Activated CD4-positive, alpha-beta memory T cell treated with anti-CD3 and anti-CD28 coated beads for 36 hours (primary cell): ENCODE measurements at regions of chr3 and their contacts with region 1.

Region 1: DNA sequence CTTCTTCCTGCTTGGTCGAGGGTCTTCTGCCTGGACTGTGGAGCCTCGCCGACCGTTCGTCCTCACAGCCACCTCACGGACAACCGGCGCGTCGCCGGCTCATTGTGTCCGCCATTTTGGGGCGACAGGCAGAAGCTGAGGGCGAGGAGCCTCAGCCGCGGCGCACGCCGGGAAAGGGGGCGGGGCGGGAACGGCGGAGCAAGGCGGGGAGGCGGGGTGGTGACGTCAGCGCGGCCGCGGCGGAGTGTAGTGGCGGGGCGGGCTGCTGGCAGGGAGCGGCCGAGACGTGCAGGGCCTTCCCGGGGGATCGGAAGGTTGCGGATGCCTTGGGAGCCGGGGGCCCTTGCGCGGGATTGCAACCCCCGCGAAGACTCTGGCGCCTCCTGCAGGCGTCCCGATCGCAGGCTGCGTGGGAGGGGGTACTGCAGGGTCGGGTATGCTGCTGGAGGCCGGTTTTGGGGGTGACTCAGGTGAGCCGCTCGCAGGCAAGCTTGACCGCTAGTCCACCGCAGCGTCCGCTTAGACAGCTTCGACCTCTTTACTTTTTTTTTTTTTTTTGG is at the start of gene WDR82:
- DNase-seq: peak; percentile 99
- H3K4me3 Mint-ChIP-seq: peak within 1 kb of the TSS; percentile 92
- H3K27ac Mint-ChIP-seq: peak within 1 kb of the TSS; percentile 95
- H3K4me1 Mint-ChIP-seq: peaks cover 54% of the 10 kb centered on the region
- H3K27me3 Mint-ChIP-seq: no peaks in the 10 kb centered on the region
- total RNA-seq, gene WDR82: 110 to 111 TPM

Region 2: GRCh38 chr3:52154117-52155094 is 124.2 kb before region 1 on chr3 and contains the start of gene POC1A:
- CTCF ChIA-PET with region 1: no interaction called
- POLR2A ChIA-PET with region 1: no interaction called
- intact Hi-C with region 1: loop called (anchors 5 kb)
- DNase-seq: peak; percentile 94
- H3K4me3 Mint-ChIP-seq: peak within 1 kb of the TSS; percentile 88
- H3K27ac Mint-ChIP-seq: peak within 1 kb of the TSS; percentile 89
- H3K4me1 Mint-ChIP-seq: peaks cover 20% of the 10 kb centered on the region
- H3K27me3 Mint-ChIP-seq: no peaks in the 10 kb centered on the region
- total RNA-seq, gene POC1A: 28.5 to 30.5 TPM

Region 3: GRCh38 chr3:52231502-52232293 is 46.9 kb before region 1 on chr3:
- CTCF ChIA-PET with region 1: interaction called, 148 read pairs
- POLR2A ChIA-PET with region 1: interaction called, 16 read pairs
- intact Hi-C with region 1: no loop called
- DNase-seq: peak; percentile 90
- H3K4me3 Mint-ChIP-seq: no peak overlapping the region
- H3K27ac Mint-ChIP-seq: peak overlapping the region; percentile 73
- H3K4me1 Mint-ChIP-seq: peaks cover 37% of the 10 kb centered on the region
- H3K27me3 Mint-ChIP-seq: no peaks in the 10 kb centered on the region

Region 4: GRCh38 chr3:52245322-52246263 is 33.0 kb before region 1 on chr3 and contains the start of gene PPM1M:
- CTCF ChIA-PET with region 1: interaction called, 148 read pairs
- POLR2A ChIA-PET with region 1: interaction called, 128 read pairs
- intact Hi-C with region 1: loop called (anchors 1 kb)
- DNase-seq: peak; percentile 64
- H3K4me3 Mint-ChIP-seq: peak within 1 kb of the TSS; percentile 95
- H3K27ac Mint-ChIP-seq: peak within 1 kb of the TSS; percentile 94
- H3K4me1 Mint-ChIP-seq: peaks cover 80% of the 10 kb centered on the region
- H3K27me3 Mint-ChIP-seq: no peaks in the 10 kb centered on the region
- total RNA-seq, gene PPM1M: 111 TPM

Region 5: GRCh38 chr3:52291508-52292181 is 13.1 kb after region 1 on chr3:
- CTCF ChIA-PET with region 1: interaction called, 22 read pairs
- POLR2A ChIA-PET with region 1: interaction called, 21 read pairs
- intact Hi-C with region 1: loop called (anchors 1 kb)
- DNase-seq: peak; percentile 57
- H3K4me3 Mint-ChIP-seq: no peak overlapping the region
- H3K27ac Mint-ChIP-seq: no peak overlapping the region
- H3K4me1 Mint-ChIP-seq: peaks cover 17% of the 10 kb centered on the region
- H3K27me3 Mint-ChIP-seq: no peaks in the 10 kb centered on the region

Region 6: GRCh38 chr3:52436500-52437149 is 158.0 kb after region 1 on chr3:
- CTCF ChIA-PET with region 1: no interaction called
- POLR2A ChIA-PET with region 1: no interaction called
- intact Hi-C with region 1: no loop called
- DNase-seq: no peak
- H3K4me3 Mint-ChIP-seq: no peak overlapping the region
- H3K27ac Mint-ChIP-seq: no peak overlapping the region
- H3K4me1 Mint-ChIP-seq: peaks cover 3% of the 10 kb centered on the region
- H3K27me3 Mint-ChIP-seq: no peaks in the 10 kb centered on the region

Region 7: GRCh38 chr3:52670621-52671521 is 392.3 kb after region 1 on chr3:
- CTCF ChIA-PET with region 1: no interaction called
- POLR2A ChIA-PET with region 1: no interaction called
- intact Hi-C with region 1: loop called (anchors 5 kb)
- DNase-seq: peak; percentile 84
- H3K4me3 Mint-ChIP-seq: peak overlapping the region; percentile 51
- H3K27ac Mint-ChIP-seq: peak overlapping the region; percentile 82
- H3K4me1 Mint-ChIP-seq: peaks cover 42% of the 10 kb centered on the region
- H3K27me3 Mint-ChIP-seq: no peaks in the 10 kb centered on the region